Posterior cingulate gyrus (tissue), 11 donors: ENCODE measurements at regions of chr11 and their contacts with region 1.

Region 1: GRCh38 chr11:1832211-1832919 is 2.4 kb upstream of the SYT8 start:
- DNase-seq: peak in 9 of 10 donors; percentile 40 to 93 (median 68)

Region 2: GRCh38 chr11:1652771-1653540 is 179.4 kb before region 1 on chr11:
- intact Hi-C with region 1: loop called (anchors 1 kb)
- DNase-seq: peak; percentile 70 to 98 (median 86)

Region 3: DNA sequence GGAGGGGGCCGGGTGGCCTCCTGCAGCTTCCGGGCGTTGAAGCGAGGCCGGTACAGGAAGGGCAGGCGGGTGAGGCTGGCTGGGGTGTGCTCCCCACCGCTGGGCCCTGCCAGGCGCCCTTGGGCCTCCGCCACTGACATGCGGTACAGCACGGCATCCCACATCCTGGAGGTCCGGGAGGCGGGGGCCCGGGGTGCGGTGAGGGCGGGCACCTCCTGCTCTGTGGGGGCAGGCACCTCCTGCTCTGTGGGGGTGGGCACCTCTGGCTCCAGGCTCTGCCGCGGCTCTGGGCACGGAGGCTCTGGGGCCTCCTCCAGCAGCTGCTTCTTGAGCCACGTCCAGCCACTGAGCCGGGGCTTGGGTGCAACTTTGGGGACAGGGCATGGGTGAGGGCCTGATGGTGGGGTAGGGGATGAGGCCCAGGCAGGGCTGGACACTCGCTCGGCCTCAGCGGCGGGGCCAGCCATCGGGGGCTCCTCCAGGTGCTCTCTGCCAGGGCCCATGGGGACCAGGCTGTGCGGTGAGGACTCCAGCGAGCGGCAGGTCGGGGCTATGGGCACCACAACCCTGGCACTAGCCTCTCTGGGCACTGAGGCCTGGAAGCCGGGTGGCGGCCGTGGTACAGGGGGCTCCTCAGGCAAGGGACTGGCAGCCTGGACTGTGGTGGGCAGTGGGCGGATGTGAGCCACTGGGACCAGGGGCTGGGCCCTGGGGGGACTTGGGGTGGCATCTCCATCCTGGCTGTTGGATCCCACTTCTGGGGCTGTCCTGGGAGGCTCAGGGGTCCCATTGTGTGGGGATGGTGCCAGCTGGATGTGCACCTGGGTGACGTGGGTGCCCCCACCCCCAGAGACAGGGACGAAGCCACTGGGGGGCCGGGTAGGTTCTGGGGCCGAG is 57.1 kb after region 1 on chr11:
- intact Hi-C with region 1: no loop called
- DNase-seq: peak in 4 of 10 donors; percentile 26 to 83 (median 67)

Region 4: GRCh38 chr11:2002807-2003206 is 170.4 kb after region 1 on chr11:
- intact Hi-C with region 1: no loop called
- DNase-seq: no peak